Natural killer cell (primary cell): ENCODE measurements at regions of chr12 and their contacts with region 1.

Region 1: GRCh38 chr12:95117178-95117599 is 43.8 kb upstream of the NR2C1 start:
- DNase-seq: peak; percentile 19 to 82
- ATAC-seq: peak; percentile 64 to 81 (median 68)
- H3K4me3 ChIP-seq: no peak overlapping the region
- H3K4me3 Mint-ChIP-seq: no peak overlapping the region
- H3K27ac ChIP-seq: no peak overlapping the region
- H3K27ac Mint-ChIP-seq: no peak overlapping the region
- H3K4me1 ChIP-seq: no peaks in the 10 kb centered on the region
- H3K4me1 Mint-ChIP-seq: no peaks in the 10 kb centered on the region
- H3K27me3 ChIP-seq: no peaks in the 10 kb centered on the region
- H3K27me3 Mint-ChIP-seq: no peaks in the 10 kb centered on the region
- CTCF ChIP-seq: peak; percentile 76

Region 2: DNA sequence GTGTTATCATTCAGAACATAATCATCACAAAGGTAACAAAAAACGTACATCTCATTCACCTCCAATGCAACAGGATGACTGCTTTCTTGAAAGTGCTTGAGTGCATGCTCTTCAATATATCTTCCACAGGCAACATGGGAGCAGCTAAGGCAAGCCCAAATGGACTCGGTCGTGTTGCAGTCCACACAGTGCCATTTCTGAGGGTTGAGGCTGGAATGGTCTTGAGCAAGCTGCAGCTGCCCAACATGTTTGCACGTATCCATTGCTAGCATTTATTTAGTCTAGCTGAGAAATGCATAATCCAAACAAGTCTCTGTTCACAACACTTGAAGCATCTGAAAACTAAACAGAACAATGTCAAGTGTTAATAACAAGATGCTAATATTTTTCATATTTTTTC is 416.8 kb after region 1 on chr12:
- intact Hi-C with region 1: loop called (anchors 1 kb)
- DNase-seq: no peak
- ATAC-seq: no peak
- H3K4me3 ChIP-seq: no peak overlapping the region
- H3K4me3 Mint-ChIP-seq: no peak overlapping the region
- H3K27ac ChIP-seq: no peak overlapping the region
- H3K27ac Mint-ChIP-seq: no peak overlapping the region
- H3K4me1 ChIP-seq: no peaks in the 10 kb centered on the region
- H3K4me1 Mint-ChIP-seq: no peaks in the 10 kb centered on the region
- H3K27me3 ChIP-seq: no peaks in the 10 kb centered on the region
- H3K27me3 Mint-ChIP-seq: peaks cover 6 to 10% of the 10 kb centered on the region in 2 donors
- CTCF ChIP-seq: no peak